PC-9 (cell line): ENCODE measurements at regions of chr5 and their contacts with region 1.

Region 1: DNA sequence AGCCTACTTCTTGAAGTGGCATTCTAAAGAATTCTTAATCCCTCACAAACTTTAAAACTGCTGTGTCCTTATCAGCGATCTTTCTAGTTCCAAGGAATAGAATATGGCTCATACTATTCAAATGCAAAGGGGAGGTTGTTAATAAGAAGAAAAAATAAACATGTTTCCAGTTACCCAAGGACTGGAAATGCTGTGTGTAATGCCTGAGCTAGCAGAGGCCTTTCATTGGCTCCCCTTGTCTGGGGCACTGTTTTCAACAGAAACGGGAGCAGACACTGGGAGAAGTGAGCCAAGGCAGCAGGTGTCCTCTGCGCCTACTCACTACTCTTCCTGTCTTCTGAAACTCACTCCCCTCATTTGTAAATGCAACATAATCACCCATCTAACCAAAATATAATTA is 253.0 kb downstream of the MARCHF11 start:
- DNase-seq: no peak
- H3K4me3 ChIP-seq: no peak overlapping the region
- H3K27ac ChIP-seq: no peak overlapping the region
- H3K4me1 ChIP-seq: no peaks in the 10 kb centered on the region
- H3K27me3 ChIP-seq: peaks cover 33% of the 10 kb centered on the region; the same call in 1 of the 2 replicates
- CTCF ChIP-seq: no peak

Region 2: GRCh38 chr5:15334551-15335266 is 591.9 kb before region 1 on chr5:
- CTCF ChIA-PET with region 1: no interaction called
- POLR2A ChIA-PET with region 1: interaction called, 10 read pairs
- intact Hi-C with region 1: no loop called
- DNase-seq: no peak
- H3K4me3 ChIP-seq: no peak overlapping the region
- H3K27ac ChIP-seq: no peak overlapping the region
- H3K4me1 ChIP-seq: no peaks in the 10 kb centered on the region
- H3K27me3 ChIP-seq: no peaks in the 10 kb centered on the region
- CTCF ChIP-seq: no peak